T-cell (primary cell): ENCODE measurements at regions of chr6 and their contacts with region 1.

Region 1: GRCh38 chr6:107763946-107764345 is 60.2 kb downstream of the SCML4 start:
- DNase-seq: no peak
- ATAC-seq: no peak
- H3K4me3 ChIP-seq: no peak overlapping the region
- H3K4me3 Mint-ChIP-seq: no peak overlapping the region
- H3K27ac ChIP-seq: no peak overlapping the region
- H3K27ac Mint-ChIP-seq: no peak overlapping the region
- H3K4me1 ChIP-seq: peaks cover 0 to 2% of the 10 kb centered on the region in 2 experiments
- H3K4me1 Mint-ChIP-seq: peaks cover 29 to 40% (median 32%) of the 10 kb centered on the region in 3 donors
- H3K27me3 ChIP-seq: no peaks in the 10 kb centered on the region
- H3K27me3 Mint-ChIP-seq: no peaks in the 10 kb centered on the region

Region 2: DNA sequence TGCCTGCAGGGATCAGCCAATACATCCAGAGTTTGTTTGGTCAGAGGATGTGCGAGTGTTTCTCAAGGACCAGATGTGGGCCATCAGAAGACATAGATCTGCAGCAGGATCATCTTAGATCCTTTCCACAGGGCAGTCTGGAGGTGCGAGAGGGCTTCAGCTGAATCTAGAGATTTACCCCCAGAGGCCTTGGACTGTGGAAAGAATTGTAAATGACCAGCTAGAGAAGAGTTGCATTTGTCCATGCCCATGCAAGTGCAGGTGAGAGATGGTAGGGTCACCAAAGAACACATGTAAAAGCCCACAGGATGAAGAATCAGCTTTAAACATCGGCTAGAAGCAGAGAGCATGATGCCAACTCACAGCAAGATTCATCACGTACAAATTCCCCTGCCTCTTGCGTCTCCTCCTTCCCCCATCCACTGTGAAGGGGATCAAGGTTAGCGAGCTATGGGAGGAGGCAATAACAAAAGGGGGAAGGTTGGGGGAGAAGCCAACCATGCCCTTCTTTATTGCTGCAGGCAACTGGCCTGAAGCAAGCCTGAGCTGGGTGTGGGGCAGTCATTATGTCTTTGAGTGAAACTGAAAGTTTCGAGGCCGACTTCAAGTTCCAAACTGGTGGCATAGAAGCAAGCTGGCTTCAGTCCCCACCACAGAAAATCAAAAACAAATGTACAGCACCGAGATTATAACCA is 23.3 kb before region 1 on chr6:
- CTCF ChIA-PET with region 1: no interaction called
- POLR2A ChIA-PET with region 1: interaction called, 6 to 12 read pairs
- DNase-seq: peak in 5 of 35 experiments; percentile 18 to 58 (median 37)
- ATAC-seq: peak; percentile 21 to 51 (median 40)
- H3K4me3 ChIP-seq: peak overlapping the region; percentile 3 to 38
- H3K4me3 Mint-ChIP-seq: peak overlapping the region; percentile 64 to 76 (median 75)
- H3K27ac ChIP-seq: peak overlapping the region; percentile 89
- H3K27ac Mint-ChIP-seq: peak overlapping the region; percentile 96
- H3K4me1 ChIP-seq: peaks cover 42 to 61% of the 10 kb centered on the region in 2 experiments
- H3K4me1 Mint-ChIP-seq: peaks cover 78 to 83% (median 80%) of the 10 kb centered on the region in 3 donors
- H3K27me3 ChIP-seq: no peaks in the 10 kb centered on the region
- H3K27me3 Mint-ChIP-seq: no peaks in the 10 kb centered on the region

Region 3: DNA sequence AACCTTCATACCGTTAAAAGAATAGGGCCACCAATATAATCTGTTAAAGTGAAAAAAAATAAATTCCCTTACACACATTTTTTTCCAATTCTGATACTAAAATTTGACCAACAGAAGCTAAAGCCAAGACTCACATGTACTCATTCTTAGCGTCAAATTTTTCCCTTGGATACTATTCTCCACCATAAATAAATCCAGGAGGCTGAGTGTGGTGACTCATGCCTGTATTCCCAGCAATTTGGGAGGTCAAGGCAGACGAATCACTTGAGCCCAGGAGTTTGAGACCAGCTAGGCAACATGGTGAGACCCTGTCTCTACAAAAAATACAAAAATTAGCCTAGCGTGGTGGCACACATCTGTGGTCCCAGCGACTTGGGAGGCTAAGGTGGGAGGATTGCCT is 16.3 kb after region 1 on chr6:
- CTCF ChIA-PET with region 1: no interaction called
- POLR2A ChIA-PET with region 1: interaction called in 1 of 2 experiments, 13 read pairs
- DNase-seq: no peak
- ATAC-seq: no peak
- H3K4me3 ChIP-seq: no peak overlapping the region
- H3K4me3 Mint-ChIP-seq: no peak overlapping the region
- H3K27ac ChIP-seq: no peak overlapping the region
- H3K27ac Mint-ChIP-seq: no peak overlapping the region
- H3K4me1 ChIP-seq: peaks cover 19 to 39% of the 10 kb centered on the region in 2 experiments
- H3K4me1 Mint-ChIP-seq: peaks cover 70 to 77% (median 76%) of the 10 kb centered on the region in 3 donors
- H3K27me3 ChIP-seq: no peaks in the 10 kb centered on the region
- H3K27me3 Mint-ChIP-seq: no peaks in the 10 kb centered on the region

Region 4: DNA sequence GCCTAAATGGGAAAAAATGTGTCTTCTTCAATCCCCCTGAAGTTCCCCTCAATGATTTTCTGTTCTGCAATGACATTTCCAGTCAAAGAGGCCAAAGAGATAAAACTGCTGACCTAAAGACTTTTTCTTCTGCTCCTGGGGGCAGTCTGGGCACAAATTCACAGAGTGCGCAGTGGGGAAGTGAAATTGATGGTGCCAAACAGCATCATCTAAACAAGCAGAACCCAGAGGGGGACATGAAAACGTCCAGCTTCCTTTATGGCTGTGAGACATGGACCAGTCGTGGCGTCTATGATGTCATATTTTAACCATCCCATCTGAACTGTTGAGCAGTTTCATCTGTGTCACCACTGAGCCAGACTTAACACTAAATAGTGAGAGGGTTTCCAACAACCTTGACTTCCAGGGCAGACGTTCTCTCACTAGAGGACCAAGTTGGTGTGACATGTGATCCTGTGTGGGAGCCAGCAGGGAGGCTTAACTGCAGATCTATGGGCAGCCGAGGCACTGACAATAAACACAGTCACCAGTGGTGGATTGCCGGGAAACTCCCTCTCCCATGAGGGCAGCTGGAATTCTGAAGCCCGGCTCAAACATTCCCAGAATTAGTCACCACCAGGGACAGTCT is 47.8 kb after region 1 on chr6:
- CTCF ChIA-PET with region 1: no interaction called
- POLR2A ChIA-PET with region 1: interaction called in 1 of 2 experiments, 12 read pairs
- DNase-seq: no peak
- ATAC-seq: no peak
- H3K4me3 ChIP-seq: no peak overlapping the region
- H3K4me3 Mint-ChIP-seq: no peak overlapping the region
- H3K27ac ChIP-seq: no peak overlapping the region
- H3K27ac Mint-ChIP-seq: peak overlapping the region; percentile 26 to 68
- H3K4me1 ChIP-seq: peaks cover 10 to 47% of the 10 kb centered on the region in 2 experiments
- H3K4me1 Mint-ChIP-seq: peaks cover 77 to 83% (median 77%) of the 10 kb centered on the region in 3 donors
- H3K27me3 ChIP-seq: no peaks in the 10 kb centered on the region
- H3K27me3 Mint-ChIP-seq: no peaks in the 10 kb centered on the region